SK-N-SH (cell line): ENCODE measurements at regions of chr11 and their contacts with region 1.

Region 1: DNA sequence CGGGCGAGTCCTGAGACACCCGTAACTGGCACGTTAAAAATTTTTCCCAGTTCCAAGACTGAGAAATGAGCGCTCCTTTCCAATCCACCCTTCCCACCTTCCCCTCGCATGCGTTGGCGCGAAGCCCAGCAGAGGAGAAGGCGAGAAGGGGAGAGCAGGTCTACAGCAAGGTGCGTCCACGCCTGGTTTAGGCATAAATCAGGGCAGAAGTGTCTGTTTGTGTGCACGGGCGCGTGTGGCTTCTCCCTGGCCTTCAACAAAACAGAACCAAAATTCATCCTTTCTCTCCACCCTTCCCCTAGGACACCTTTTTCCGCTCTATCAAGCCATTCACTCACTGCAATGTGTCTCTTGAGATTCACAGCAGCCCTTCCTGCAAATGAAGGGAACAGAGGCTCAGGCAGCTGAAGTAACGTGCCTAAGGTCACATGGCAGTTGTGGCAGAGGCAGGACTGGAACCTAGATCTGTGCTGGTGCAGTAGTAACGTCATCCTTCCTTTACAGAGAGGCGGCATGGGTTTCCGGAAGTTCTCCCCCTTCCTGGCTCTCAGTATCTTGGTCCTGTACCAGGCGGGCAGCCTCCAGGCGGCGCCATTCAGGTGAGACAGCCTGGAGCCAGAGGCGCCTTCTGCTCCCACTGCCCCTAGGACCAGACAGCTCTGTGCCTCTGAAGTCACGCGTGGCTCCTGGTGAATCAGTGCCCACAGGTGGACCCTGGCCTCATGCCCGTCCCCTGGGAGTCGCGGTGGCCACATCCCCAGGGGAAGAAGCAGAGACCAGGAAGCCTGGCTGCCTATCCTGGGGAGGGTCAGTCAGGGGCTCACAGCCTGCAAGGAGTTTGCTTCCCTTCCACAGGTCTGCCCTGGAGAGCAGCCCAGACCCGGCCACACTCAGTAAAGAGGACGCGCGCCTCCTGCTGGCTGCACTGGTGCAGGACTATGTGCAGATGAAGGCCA is 1.1 kb downstream of the CALCB start:
- DNase-seq: peak; percentile 83
- H3K4me3 ChIP-seq: peak overlapping the region; percentile 50 to 57
- H3K27ac ChIP-seq: no peak overlapping the region; a peak in 1 of 4 replicates
- H3K4me1 ChIP-seq: peaks cover 0 to 15% of the 10 kb centered on the region in 2 experiments; a peak in 1 of 4 replicates
- H3K27me3 ChIP-seq: peaks cover 17% of the 10 kb centered on the region
- CTCF ChIP-seq: peak; percentile 70
- EP300 ChIP-seq: no peak
- RAD21 ChIP-seq: peak; percentile 83

Region 2: DNA sequence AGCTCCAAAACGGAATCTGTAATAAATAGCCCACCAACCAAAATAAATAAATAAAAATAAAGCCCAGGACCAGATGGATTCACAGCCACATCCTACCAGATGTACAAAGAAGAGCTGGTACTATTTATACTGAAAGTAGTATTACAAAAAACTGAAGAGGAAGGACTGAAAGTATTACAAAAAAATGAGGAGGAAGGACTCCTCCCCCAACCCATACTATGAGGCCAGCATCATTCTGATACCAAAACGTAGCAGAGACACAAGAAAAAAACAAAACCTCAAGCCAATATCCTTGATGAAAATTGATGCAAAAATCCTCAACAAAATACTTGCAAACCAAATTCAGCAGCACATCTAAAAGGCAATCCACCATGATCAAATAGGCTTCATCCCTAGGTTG is 247.9 kb before region 1 on chr11:
- CTCF ChIA-PET with region 1: no interaction called
- POLR2A ChIA-PET with region 1: no interaction called
- DNase-seq: no peak
- H3K4me3 ChIP-seq: no peak overlapping the region
- H3K27ac ChIP-seq: no peak overlapping the region
- H3K4me1 ChIP-seq: no peaks in the 10 kb centered on the region
- H3K27me3 ChIP-seq: no peaks in the 10 kb centered on the region
- CTCF ChIP-seq: no peak
- EP300 ChIP-seq: no peak
- RAD21 ChIP-seq: no peak

Region 3: DNA sequence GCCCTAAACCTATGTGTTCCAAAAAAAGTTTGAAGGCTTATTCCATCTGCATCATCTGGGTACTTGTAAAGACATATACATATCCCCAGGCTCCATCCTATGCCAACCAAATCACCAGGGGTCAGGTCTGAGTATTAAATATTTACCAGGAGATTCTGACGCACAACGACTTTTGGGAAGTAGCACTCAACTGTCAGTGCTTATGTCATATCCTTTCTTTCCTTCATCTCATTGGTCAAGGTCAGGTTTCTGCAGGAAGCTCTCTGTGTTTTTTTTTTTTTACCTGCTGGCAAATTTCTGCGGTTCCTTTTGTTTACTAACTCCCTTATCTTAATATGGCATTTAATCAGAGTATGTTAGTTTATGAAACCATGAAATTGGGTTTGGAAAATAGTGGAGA is 159.9 kb before region 1 on chr11:
- CTCF ChIA-PET with region 1: interaction called, 198 read pairs
- POLR2A ChIA-PET with region 1: no interaction called
- DNase-seq: no peak
- H3K4me3 ChIP-seq: no peak overlapping the region
- H3K27ac ChIP-seq: no peak overlapping the region
- H3K4me1 ChIP-seq: no peaks in the 10 kb centered on the region
- H3K27me3 ChIP-seq: no peaks in the 10 kb centered on the region; the same call in 1 of the 2 replicates
- CTCF ChIP-seq: no peak
- EP300 ChIP-seq: no peak
- RAD21 ChIP-seq: no peak

Region 4: GRCh38 chr11:14974515-14975251 is 99.8 kb before region 1 on chr11:
- CTCF ChIA-PET with region 1: interaction called, 126 read pairs
- POLR2A ChIA-PET with region 1: interaction called, 3 read pairs
- DNase-seq: peak; percentile 65
- H3K4me3 ChIP-seq: peak overlapping the region; percentile 14 to 33; a peak in 3 of 4 replicates
- H3K27ac ChIP-seq: no peak overlapping the region
- H3K4me1 ChIP-seq: peaks cover 0 to 23% of the 10 kb centered on the region in 2 experiments; a peak in 1 of 4 replicates
- H3K27me3 ChIP-seq: peaks cover 53% of the 10 kb centered on the region
- CTCF ChIP-seq: peak; percentile 63
- EP300 ChIP-seq: no peak
- RAD21 ChIP-seq: peak; percentile 51

Region 5: DNA sequence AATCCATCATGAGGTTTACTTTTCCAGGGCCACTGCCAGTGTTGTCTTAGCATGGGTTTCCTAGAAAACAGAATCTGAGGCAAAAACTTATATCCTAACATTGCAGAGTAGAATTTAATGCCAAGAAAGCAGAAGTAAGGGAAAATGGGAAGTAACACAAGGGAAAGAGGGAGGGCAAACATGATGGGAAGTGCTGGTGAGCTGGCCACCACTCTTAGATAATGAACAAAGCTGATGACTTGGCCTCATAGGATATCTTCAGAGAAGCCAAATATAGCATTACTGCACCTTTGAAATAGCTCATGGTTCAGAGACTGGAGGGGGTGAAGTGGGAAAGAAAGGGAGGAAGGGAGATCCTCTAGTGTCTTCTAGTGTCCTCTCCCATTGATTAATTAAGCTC is 25.9 kb before region 1 on chr11:
- CTCF ChIA-PET with region 1: interaction called, 18 read pairs
- POLR2A ChIA-PET with region 1: no interaction called
- DNase-seq: no peak
- H3K4me3 ChIP-seq: no peak overlapping the region
- H3K27ac ChIP-seq: no peak overlapping the region
- H3K4me1 ChIP-seq: no peaks in the 10 kb centered on the region
- H3K27me3 ChIP-seq: no peaks in the 10 kb centered on the region
- CTCF ChIP-seq: no peak
- EP300 ChIP-seq: no peak
- RAD21 ChIP-seq: no peak

Region 6: DNA sequence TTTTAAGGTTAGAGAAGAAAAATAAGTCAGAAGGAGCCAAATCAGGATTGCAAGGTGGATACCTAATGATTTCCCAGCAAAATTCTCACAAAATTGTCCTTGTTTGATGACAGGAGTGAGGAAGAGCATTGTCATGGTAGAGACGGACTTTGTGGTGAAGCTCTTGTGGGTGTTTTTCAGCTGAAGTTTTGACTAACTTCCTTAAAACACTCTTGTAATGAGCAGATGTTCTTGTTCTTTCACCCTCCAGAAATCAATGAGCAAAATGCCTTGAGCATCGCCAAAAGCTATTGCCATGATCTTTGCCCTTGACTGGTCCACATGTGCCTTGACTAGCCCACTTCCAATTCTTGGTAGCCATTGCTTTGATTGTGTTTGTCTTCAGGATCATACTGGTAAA is 18.9 kb after region 1 on chr11:
- CTCF ChIA-PET with region 1: interaction called, 58 read pairs
- POLR2A ChIA-PET with region 1: no interaction called
- DNase-seq: no peak
- H3K4me3 ChIP-seq: no peak overlapping the region
- H3K27ac ChIP-seq: no peak overlapping the region
- H3K4me1 ChIP-seq: no peaks in the 10 kb centered on the region
- H3K27me3 ChIP-seq: no peaks in the 10 kb centered on the region
- CTCF ChIP-seq: no peak
- EP300 ChIP-seq: no peak
- RAD21 ChIP-seq: no peak